PC-9 (cell line): ENCODE measurements at regions of chr1 and their contacts with region 1.

Region 1: GRCh38 chr1:21117597-21118001 is 59.1 kb downstream of the EIF4G3 start:
- DNase-seq: no peak
- H3K4me3 ChIP-seq: no peak overlapping the region
- H3K27ac ChIP-seq: no peak overlapping the region
- H3K4me1 ChIP-seq: no peaks in the 10 kb centered on the region
- H3K27me3 ChIP-seq: no peaks in the 10 kb centered on the region
- CTCF ChIP-seq: no peak

Region 2: GRCh38 chr1:20530906-20531305 is 586.7 kb before region 1 on chr1:
- CTCF ChIA-PET with region 1: no interaction called
- POLR2A ChIA-PET with region 1: no interaction called
- intact Hi-C with region 1: no loop called
- DNase-seq: peak; percentile 66 to 87
- H3K4me3 ChIP-seq: no peak overlapping the region
- H3K27ac ChIP-seq: no peak overlapping the region
- H3K4me1 ChIP-seq: peaks cover 21% of the 10 kb centered on the region
- H3K27me3 ChIP-seq: no peaks in the 10 kb centered on the region
- CTCF ChIP-seq: no peak

Region 3: GRCh38 chr1:21077085-21077484 is 40.5 kb before region 1 on chr1:
- CTCF ChIA-PET with region 1: interaction called, 20 read pairs
- POLR2A ChIA-PET with region 1: no interaction called
- intact Hi-C with region 1: no loop called
- DNase-seq: no peak
- H3K4me3 ChIP-seq: no peak overlapping the region
- H3K27ac ChIP-seq: no peak overlapping the region
- H3K4me1 ChIP-seq: no peaks in the 10 kb centered on the region
- H3K27me3 ChIP-seq: no peaks in the 10 kb centered on the region
- CTCF ChIP-seq: no peak

Region 4: GRCh38 chr1:21439721-21440629 is 322.4 kb after region 1 on chr1 and contains the start of gene NBPF3:
- CTCF ChIA-PET with region 1: no interaction called
- POLR2A ChIA-PET with region 1: no interaction called
- intact Hi-C with region 1: no loop called
- DNase-seq: peak; percentile 80 to 93
- H3K4me3 ChIP-seq: peak within 1 kb of the TSS; percentile 57
- H3K27ac ChIP-seq: no peak within 1 kb of the TSS
- H3K4me1 ChIP-seq: peaks cover 7% of the 10 kb centered on the region
- H3K27me3 ChIP-seq: no peaks in the 10 kb centered on the region
- CTCF ChIP-seq: no peak
- total RNA-seq, gene NBPF3: 19.2 and 23.6 TPM in 2 replicates